ENCODE measurements at regions of chr11 and their contacts with region 1.

Region 1: DNA sequence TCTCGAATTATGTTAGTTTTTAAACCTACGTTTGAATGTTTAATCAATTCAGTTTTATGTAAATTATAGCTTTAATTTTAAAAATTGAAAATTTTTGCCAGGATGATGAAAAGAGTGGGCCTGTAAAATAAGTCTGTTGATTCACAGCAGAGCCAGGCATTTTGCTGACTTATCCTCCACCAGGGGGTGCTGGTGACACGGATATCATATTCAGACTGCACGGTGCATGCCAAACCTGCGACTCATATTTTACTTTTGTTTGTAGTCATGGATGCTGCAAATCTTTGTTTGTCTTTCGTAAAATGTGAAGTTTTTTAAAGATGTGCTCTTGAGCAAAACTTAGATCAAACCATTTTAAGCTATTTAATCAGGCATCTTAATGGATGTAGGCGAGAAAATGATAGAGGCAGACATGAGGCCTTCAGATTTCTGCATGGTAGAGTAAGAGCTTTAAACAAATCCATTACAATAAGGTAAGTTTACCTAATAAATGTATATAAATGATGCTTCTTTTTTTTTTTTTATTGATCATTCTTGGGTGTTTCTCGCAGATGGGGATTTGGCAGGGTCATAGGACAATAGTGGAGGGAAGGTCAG is 3.6 kb upstream of the OR8B3 start:
- DNase-seq: peak; percentile 79
- ATAC-seq: peak; percentile 81
- H3K4me3 Mint-ChIP-seq: no peak overlapping the region
- H3K27ac Mint-ChIP-seq: no peak overlapping the region
- H3K4me1 Mint-ChIP-seq: no peaks in the 10 kb centered on the region
- H3K27me3 Mint-ChIP-seq: peaks cover 2% of the 10 kb centered on the region
- CTCF ChIP-seq: peak; percentile 72

Region 2: DNA sequence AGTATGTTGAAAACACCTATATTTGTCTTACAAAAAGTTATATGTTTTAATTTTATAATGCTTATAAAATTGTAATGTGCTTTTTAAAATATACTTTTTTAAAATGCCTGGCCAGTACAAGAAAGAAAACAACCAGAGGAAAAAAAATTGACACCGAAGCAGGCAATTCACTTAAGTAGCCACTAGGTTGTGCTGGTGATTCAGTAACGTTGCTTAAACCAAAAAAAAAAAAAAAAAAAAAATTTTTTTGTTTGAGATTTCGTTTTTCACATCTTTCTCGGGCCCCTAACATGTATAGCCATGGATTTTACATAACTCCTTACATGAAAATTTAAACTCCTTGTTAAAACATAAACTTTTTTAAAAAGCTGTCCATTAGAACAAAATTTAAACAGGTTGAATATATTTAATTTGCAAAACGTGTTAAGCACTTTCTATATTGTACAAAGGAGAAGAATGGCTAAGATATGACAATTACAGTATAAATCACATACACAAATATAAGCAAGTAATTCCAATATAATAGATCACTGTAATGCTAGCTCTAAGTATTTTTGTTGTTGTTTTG is 13.0 kb after region 1 on chr11:
- CTCF ChIA-PET with region 1: interaction called, 16 read pairs
- POLR2A ChIA-PET with region 1: no interaction called
- intact Hi-C with region 1: no loop called
- DNase-seq: no peak
- ATAC-seq: no peak
- H3K4me3 Mint-ChIP-seq: no peak overlapping the region
- H3K27ac Mint-ChIP-seq: no peak overlapping the region
- H3K4me1 Mint-ChIP-seq: no peaks in the 10 kb centered on the region
- H3K27me3 Mint-ChIP-seq: peaks cover 8% of the 10 kb centered on the region
- CTCF ChIP-seq: peak; percentile 82

Region 3: GRCh38 chr11:124429599-124429998 is 27.2 kb after region 1 on chr11:
- CTCF ChIA-PET with region 1: interaction called, 12 read pairs
- POLR2A ChIA-PET with region 1: no interaction called
- intact Hi-C with region 1: no loop called
- DNase-seq: no peak
- ATAC-seq: no peak
- H3K4me3 Mint-ChIP-seq: no peak overlapping the region
- H3K27ac Mint-ChIP-seq: no peak overlapping the region
- H3K4me1 Mint-ChIP-seq: no peaks in the 10 kb centered on the region
- H3K27me3 Mint-ChIP-seq: no peaks in the 10 kb centered on the region
- CTCF ChIP-seq: no peak

Region 4: DNA sequence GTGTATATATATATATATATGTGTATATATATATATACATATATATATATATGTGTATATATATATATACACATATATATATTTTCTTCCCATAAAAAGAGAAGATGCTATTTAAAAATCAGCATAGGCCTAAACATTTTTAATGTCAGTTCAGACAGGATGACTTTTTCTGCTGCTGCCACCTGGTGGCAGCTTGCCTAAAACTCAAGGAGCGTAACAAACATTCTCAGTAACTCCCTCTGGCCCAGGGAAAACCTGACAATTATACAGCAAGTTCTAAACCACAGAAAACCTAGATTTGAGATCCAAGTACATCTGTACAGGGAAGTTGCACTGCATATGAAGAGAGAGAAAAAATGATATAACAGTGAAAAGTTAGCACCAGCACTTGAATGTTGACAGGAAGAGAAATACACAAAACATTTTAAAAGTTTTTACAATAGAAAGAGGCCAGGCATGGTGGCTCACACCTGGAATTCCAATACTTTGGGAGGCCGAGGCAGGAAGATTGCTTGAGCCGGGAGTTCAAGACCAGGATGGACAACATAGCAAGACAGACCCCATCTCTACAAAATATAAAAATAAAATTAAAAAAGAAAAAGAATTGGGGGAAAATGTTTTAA is 183.9 kb after region 1 on chr11:
- CTCF ChIA-PET with region 1: interaction called, 13 read pairs
- POLR2A ChIA-PET with region 1: no interaction called
- intact Hi-C with region 1: no loop called
- DNase-seq: peak; percentile 68
- ATAC-seq: no peak
- H3K4me3 Mint-ChIP-seq: no peak overlapping the region
- H3K27ac Mint-ChIP-seq: no peak overlapping the region
- H3K4me1 Mint-ChIP-seq: no peaks in the 10 kb centered on the region
- H3K27me3 Mint-ChIP-seq: peaks cover 14% of the 10 kb centered on the region
- CTCF ChIP-seq: peak; percentile 76

Measured in activated CD8-positive, alpha-beta T cell treated with anti-CD3 and anti-CD28 coated beads for 36 hours (primary cell).